HCT116 (cell line): ENCODE measurements at regions of chr11 and their contacts with region 1.

Region 1: GRCh38 chr11:125874556-125875124 is 12.8 kb upstream of the HYLS1 start:
- DNase-seq: peak; percentile 44
- ATAC-seq: peak; percentile 96
- H3K4me3 ChIP-seq: no peak overlapping the region
- H3K27ac ChIP-seq: no peak overlapping the region
- H3K4me1 ChIP-seq: no peaks in the 10 kb centered on the region
- H3K27me3 ChIP-seq: no peaks in the 10 kb centered on the region
- CTCF ChIP-seq: peak; percentile 71 to 85 (median 80)
- POLR2A ChIP-seq: no peak
- RAD21 ChIP-seq: peak; percentile 90

Region 2: GRCh38 chr11:124961972-124962609 is 912.5 kb before region 1 on chr11:
- CTCF ChIA-PET with region 1: no interaction called
- POLR2A ChIA-PET with region 1: no interaction called
- RAD21 ChIA-PET with region 1: no interaction called
- intact Hi-C with region 1: loop called (anchors 2 kb)
- DNase-seq: peak; percentile 71
- ATAC-seq: peak; percentile 99
- H3K4me3 ChIP-seq: no peak overlapping the region
- H3K27ac ChIP-seq: no peak overlapping the region
- H3K4me1 ChIP-seq: no peaks in the 10 kb centered on the region
- H3K27me3 ChIP-seq: no peaks in the 10 kb centered on the region
- CTCF ChIP-seq: peak; percentile 59 to 93 (median 81)
- POLR2A ChIP-seq: no peak
- RAD21 ChIP-seq: peak; percentile 96

Region 3: DNA sequence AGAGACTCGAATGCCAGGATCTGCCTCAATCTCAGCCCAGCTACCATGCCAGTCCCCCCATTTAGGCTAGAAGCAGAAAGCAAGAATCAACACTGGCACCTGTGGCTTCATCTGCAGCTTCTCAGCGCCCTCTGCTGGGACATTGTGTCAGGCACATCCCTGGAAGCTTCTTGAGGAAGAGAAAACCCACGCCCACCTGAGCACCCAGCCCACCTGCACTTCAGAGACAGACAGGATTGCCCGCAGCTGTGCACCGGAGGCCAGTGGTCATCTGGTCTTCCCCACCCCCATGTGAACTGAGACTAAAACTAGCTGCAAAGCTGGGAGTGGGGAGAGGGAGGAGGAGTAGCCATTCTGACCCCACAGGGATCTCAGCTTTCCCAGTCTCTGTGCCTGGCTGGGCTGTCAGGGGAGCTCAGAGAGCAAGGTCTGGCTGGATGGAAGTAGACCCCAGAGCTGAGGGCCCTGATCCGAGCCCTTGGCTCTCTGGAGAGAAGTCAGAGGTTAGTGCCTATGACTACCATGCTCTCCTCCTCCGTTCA is 445.4 kb before region 1 on chr11:
- CTCF ChIA-PET with region 1: interaction called, 6 read pairs
- POLR2A ChIA-PET with region 1: no interaction called
- RAD21 ChIA-PET with region 1: no interaction called
- intact Hi-C with region 1: loop called (anchors 1 kb)
- DNase-seq: peak; percentile 63
- ATAC-seq: peak; percentile 78
- H3K4me3 ChIP-seq: peak overlapping the region; percentile 18 to 22; a peak in 3 of 4 replicates
- H3K27ac ChIP-seq: no peak overlapping the region
- H3K4me1 ChIP-seq: peaks cover 7 to 20% of the 10 kb centered on the region in 2 experiments; a peak in 3 of 4 replicates
- H3K27me3 ChIP-seq: no peaks in the 10 kb centered on the region
- CTCF ChIP-seq: peak; percentile 81 to 91 (median 86)
- POLR2A ChIP-seq: no peak
- RAD21 ChIP-seq: peak; percentile 85

Region 4: DNA sequence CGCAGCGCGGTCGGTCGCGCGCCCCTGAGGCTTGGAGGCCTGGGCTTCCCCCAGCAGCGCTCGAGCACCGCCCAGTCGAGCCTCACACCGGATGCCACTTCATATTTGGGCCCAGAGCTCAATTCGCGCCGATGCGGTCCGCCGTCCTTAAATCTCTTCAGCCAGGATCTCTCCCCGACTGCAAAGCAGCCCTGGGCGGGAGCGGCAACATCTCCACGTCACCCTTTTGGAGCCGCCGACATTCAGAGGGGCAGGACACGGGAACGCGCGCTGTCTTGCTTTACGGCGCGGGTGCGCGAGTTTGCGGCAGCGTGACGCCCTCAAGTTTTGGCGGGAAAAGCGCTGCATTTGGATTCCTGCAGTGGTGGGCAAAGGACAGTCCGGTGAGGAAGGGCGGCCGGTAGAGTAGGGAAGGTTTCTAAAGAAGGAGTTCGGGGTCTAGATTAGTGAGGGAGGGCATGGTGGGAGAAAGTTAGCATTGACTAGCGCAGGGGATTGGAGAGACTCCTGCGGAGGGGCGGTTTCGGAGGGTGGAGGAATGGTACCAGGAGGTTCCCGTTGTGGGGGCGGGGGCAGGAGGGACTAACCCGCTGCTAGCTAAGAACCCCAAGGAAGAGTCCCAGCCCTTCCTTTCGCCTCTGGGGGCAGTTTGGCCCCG is 248.9 kb before region 1 on chr11:
- CTCF ChIA-PET with region 1: no interaction called
- POLR2A ChIA-PET with region 1: no interaction called
- RAD21 ChIA-PET with region 1: no interaction called
- intact Hi-C with region 1: loop called (anchors 2 kb)
- DNase-seq: peak; percentile 86
- ATAC-seq: peak; percentile 86
- H3K4me3 ChIP-seq: peak overlapping the region; percentile 56 to 75
- H3K27ac ChIP-seq: peak overlapping the region; percentile 85
- H3K4me1 ChIP-seq: peaks cover 4 to 17% of the 10 kb centered on the region in 2 experiments; a peak in 3 of 4 replicates
- H3K27me3 ChIP-seq: no peaks in the 10 kb centered on the region
- CTCF ChIP-seq: no peak
- POLR2A ChIP-seq: peak; percentile 72
- RAD21 ChIP-seq: no peak

Region 5: DNA sequence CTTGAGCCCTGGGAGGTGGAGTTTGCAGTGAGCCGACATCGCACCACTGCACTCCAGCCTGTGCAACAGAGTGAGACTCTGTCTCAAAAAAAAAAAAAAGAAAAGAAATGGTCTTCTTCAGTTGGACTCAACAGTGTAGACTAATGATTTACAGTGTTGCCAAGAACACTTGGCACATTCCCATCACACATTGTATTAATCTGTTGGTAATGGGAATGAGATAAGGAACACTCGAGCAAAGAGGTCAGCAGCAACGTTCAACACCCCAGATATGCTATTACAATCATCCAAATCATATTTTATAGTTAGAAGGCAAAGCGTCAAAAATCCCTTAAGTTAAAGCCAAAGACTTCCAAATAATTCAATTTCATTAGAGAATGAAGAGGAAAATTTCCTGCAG is 173.6 kb after region 1 on chr11:
- CTCF ChIA-PET with region 1: no interaction called
- POLR2A ChIA-PET with region 1: no interaction called
- RAD21 ChIA-PET with region 1: no interaction called
- intact Hi-C with region 1: no loop called
- DNase-seq: no peak
- ATAC-seq: no peak
- H3K4me3 ChIP-seq: no peak overlapping the region
- H3K27ac ChIP-seq: no peak overlapping the region
- H3K4me1 ChIP-seq: no peaks in the 10 kb centered on the region
- H3K27me3 ChIP-seq: no peaks in the 10 kb centered on the region
- CTCF ChIP-seq: no peak
- POLR2A ChIP-seq: no peak
- RAD21 ChIP-seq: no peak